Activated naive CD4-positive, alpha-beta T cell treated with anti-CD3 and anti-CD28 coated beads for 36 hours (primary cell): ENCODE measurements at regions of chr5 and their contacts with region 1.

Region 1: GRCh38 chr5:178069909-178070308 is 43.4 kb upstream of the N4BP3 start:
- DNase-seq: peak; percentile 65
- H3K4me3 Mint-ChIP-seq: no peak overlapping the region
- H3K27ac Mint-ChIP-seq: no peak overlapping the region
- H3K4me1 Mint-ChIP-seq: peaks cover 4% of the 10 kb centered on the region
- H3K27me3 Mint-ChIP-seq: no peaks in the 10 kb centered on the region

Region 2: DNA sequence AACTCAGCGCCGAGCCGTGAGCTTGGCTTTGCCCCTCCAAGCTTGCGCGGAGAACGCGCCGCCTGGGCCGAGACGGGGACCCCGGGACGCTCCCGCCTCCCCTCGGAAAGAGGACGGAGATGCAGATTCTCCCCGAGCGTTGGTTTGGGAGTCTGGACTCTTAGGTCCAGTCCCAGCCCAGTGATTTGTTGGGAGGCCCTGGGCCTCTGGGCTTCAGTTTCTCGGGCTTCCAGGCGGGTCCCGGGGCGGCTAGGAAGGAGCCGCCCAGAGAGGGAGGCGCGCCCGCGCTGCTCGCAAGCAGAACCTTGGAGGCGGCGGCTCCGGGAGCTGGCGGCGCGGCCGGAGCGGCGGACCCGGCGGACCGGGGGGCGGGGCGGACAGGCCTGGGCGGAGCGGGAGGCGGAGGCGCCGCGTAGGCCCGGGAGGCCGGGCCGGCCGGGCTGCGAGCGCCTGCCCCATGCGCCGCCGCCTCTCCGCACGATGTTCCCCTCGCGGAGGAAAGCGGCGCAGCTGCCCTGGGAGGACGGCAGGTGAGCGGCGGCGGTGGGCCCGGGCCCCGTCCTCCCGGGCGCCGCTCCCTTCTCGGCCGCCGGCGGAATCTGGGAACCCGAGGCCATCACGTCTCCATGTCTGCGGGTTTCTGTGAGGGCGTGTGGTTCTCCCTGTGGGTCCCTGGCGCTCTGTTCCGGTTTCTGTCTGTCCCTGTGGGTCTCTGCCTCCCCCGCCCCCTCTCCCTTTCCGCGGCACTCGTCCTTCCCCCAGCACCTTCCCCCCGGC is 470.0 kb before region 1 on chr5 and contains the start of gene B4GALT7:
- CTCF ChIA-PET with region 1: no interaction called
- intact Hi-C with region 1: loop called (anchors 10 kb)
- DNase-seq: peak; percentile 86
- H3K4me3 Mint-ChIP-seq: peak within 1 kb of the TSS; percentile 98
- H3K27ac Mint-ChIP-seq: peak within 1 kb of the TSS; percentile 79
- H3K4me1 Mint-ChIP-seq: peaks cover 35% of the 10 kb centered on the region
- H3K27me3 Mint-ChIP-seq: no peaks in the 10 kb centered on the region
- total RNA-seq, gene B4GALT7: 9.9 to 13.6 TPM

Region 3: GRCh38 chr5:178081384-178082222 is 11.7 kb after region 1 on chr5:
- CTCF ChIA-PET with region 1: no interaction called
- intact Hi-C with region 1: no loop called
- DNase-seq: no peak
- H3K4me3 Mint-ChIP-seq: no peak overlapping the region
- H3K27ac Mint-ChIP-seq: no peak overlapping the region
- H3K4me1 Mint-ChIP-seq: no peaks in the 10 kb centered on the region
- H3K27me3 Mint-ChIP-seq: peaks cover 5% of the 10 kb centered on the region

Region 4: DNA sequence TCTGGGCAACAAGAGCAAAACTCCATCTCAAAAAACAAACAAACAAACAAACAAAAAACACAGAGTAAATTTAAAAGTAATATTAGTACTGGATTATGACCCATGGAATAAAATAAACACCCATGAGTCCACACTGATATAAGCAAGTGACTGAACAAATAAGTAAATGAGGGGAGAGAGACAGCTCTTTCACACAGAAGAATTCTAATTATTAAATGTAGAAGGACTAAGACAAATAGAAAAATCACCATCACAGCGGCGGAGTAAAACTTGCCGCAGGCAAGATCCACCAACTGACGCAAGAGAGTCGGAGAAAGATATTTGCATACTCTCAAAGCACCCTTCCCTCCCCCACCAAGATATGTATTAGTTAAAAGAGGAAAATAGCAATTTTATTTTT is 28.7 kb after region 1 on chr5:
- CTCF ChIA-PET with region 1: no interaction called
- intact Hi-C with region 1: no loop called
- DNase-seq: no peak
- H3K4me3 Mint-ChIP-seq: no peak overlapping the region
- H3K27ac Mint-ChIP-seq: no peak overlapping the region
- H3K4me1 Mint-ChIP-seq: peaks cover 10% of the 10 kb centered on the region
- H3K27me3 Mint-ChIP-seq: no peaks in the 10 kb centered on the region

Region 5: GRCh38 chr5:178434851-178435250 is 364.9 kb after region 1 on chr5:
- CTCF ChIA-PET with region 1: no interaction called
- intact Hi-C with region 1: no loop called
- DNase-seq: no peak
- H3K4me3 Mint-ChIP-seq: no peak overlapping the region
- H3K27ac Mint-ChIP-seq: no peak overlapping the region
- H3K4me1 Mint-ChIP-seq: no peaks in the 10 kb centered on the region
- H3K27me3 Mint-ChIP-seq: no peaks in the 10 kb centered on the region